ENCODE measurements at regions of chr11 and their contacts with region 1.

Region 1: GRCh38 chr11:128172046-128172878 is 415.1 kb downstream of the ETS1 start:
- DNase-seq: peak; percentile 84 to 88
- H3K4me3 ChIP-seq: no peak overlapping the region
- H3K4me3 Mint-ChIP-seq: no peak overlapping the region
- H3K27ac Mint-ChIP-seq: no peak overlapping the region
- H3K4me1 ChIP-seq: peaks cover 3% of the 10 kb centered on the region; the same call in 1 of the 2 replicates
- H3K4me1 Mint-ChIP-seq: no peaks in the 10 kb centered on the region
- H3K27me3 ChIP-seq: no peaks in the 10 kb centered on the region
- H3K27me3 Mint-ChIP-seq: peaks cover 12% of the 10 kb centered on the region
- CTCF ChIP-seq: peak; percentile 94 to 96

Region 2: GRCh38 chr11:128210148-128210940 is 38.1 kb after region 1 on chr11:
- CTCF ChIA-PET with region 1: interaction called, 5 read pairs
- POLR2A ChIA-PET with region 1: no interaction called
- intact Hi-C with region 1: loop called (anchors 1 kb)
- DNase-seq: peak; percentile 89 to 91
- H3K4me3 ChIP-seq: no peak overlapping the region
- H3K4me3 Mint-ChIP-seq: peak overlapping the region; percentile 62
- H3K27ac Mint-ChIP-seq: peak overlapping the region; percentile 80
- H3K4me1 ChIP-seq: peaks cover 46% of the 10 kb centered on the region
- H3K4me1 Mint-ChIP-seq: peaks cover 40% of the 10 kb centered on the region
- H3K27me3 ChIP-seq: no peaks in the 10 kb centered on the region
- H3K27me3 Mint-ChIP-seq: no peaks in the 10 kb centered on the region
- CTCF ChIP-seq: no peak

Region 3: DNA sequence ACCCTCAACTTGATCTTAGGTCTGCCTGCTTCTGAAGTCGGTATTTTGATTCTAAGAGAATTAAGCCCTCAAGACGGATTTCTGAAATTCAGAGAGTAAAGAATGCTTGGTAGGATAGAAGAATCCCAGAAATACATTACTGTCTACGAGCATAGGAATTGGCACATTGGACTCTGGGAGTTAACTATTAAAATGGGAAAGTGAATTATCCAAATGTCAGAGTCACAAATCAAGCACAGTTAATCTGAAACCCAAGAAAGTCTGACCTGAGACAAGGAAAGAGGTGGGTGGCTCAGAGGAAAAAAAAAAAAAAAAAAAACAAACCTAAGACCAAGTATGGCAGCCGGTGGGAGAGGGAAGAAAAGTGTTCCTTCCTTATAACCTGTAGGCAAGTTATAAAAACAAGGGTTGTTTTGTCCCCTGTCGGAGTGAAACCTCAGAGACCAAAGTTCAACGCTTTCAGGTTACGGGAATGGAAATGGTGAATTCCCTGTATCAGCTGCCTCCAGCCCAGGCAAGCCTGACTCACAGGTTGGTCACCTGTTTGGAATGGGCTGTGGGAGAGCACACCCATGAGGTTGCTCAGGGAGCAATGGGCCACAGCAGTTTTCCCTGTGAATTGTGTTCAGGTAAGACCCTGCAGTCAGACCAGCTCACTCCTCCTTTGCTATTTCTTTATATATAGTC is 276.1 kb after region 1 on chr11:
- CTCF ChIA-PET with region 1: interaction called, 10 read pairs
- POLR2A ChIA-PET with region 1: no interaction called
- intact Hi-C with region 1: loop called (anchors 1 kb)
- DNase-seq: peak; percentile 88 to 95
- H3K4me3 ChIP-seq: no peak overlapping the region
- H3K4me3 Mint-ChIP-seq: peak overlapping the region; percentile 60
- H3K27ac Mint-ChIP-seq: peak overlapping the region; percentile 84
- H3K4me1 ChIP-seq: peaks cover 19% of the 10 kb centered on the region
- H3K4me1 Mint-ChIP-seq: peaks cover 14% of the 10 kb centered on the region
- H3K27me3 ChIP-seq: no peaks in the 10 kb centered on the region
- H3K27me3 Mint-ChIP-seq: no peaks in the 10 kb centered on the region
- CTCF ChIP-seq: peak in 1 of 2 experiments; percentile 59

Region 4: GRCh38 chr11:128630367-128631230 is 458.3 kb after region 1 on chr11:
- CTCF ChIA-PET with region 1: interaction called, 17 read pairs
- POLR2A ChIA-PET with region 1: no interaction called
- intact Hi-C with region 1: loop called (anchors 1 kb)
- DNase-seq: peak; percentile 82 to 88
- H3K4me3 ChIP-seq: no peak overlapping the region
- H3K4me3 Mint-ChIP-seq: no peak overlapping the region
- H3K27ac Mint-ChIP-seq: no peak overlapping the region
- H3K4me1 ChIP-seq: no peaks in the 10 kb centered on the region
- H3K4me1 Mint-ChIP-seq: no peaks in the 10 kb centered on the region
- H3K27me3 ChIP-seq: peaks cover 1% of the 10 kb centered on the region; the same call in 1 of the 2 replicates
- H3K27me3 Mint-ChIP-seq: peaks cover 10% of the 10 kb centered on the region
- CTCF ChIP-seq: peak; percentile 96 to 97

Region 5: DNA sequence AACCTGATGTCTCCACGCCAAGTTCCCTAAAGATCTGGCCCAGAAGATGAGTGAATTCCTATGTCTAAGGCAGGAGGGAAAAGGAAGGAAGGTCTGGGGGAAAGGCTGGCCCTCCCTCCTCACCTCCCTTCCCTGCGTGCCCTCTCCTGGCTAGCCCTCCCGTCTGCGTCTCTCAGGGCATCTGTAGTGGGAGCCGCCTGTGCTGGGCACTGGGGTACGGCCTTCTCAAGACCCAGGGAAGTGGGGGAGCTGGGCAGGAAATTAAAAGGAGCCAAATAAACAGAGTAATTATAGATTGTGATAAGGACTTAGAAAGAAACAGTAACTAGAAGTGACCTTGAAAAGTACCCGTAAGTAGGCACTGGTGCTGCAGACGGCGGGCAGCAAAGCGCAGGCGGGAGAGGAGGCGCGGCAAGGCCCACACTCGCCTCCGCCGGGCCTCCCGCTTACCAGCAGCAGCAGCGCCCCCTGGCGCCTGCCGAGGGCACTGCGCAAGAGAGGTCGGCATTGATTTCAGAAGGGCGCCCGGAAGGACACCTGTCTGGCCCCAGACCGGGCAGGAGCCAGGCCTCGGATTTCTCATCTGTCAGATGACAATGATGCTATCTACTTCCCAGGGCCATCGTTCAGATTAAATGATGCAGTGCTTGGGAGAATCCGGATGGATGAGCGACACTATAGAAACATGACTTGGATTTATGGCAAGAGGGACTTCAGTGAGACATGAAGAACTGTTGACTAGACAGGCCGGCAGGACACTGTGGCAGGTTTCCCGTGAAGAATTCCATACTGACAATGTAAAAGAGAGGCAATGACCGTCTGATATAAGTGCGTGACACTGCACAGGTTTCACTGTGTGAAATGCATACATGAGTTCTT is 687.5 kb after region 1 on chr11:
- CTCF ChIA-PET with region 1: no interaction called
- POLR2A ChIA-PET with region 1: no interaction called
- intact Hi-C with region 1: loop called (anchors 1 kb)
- DNase-seq: peak; percentile 65 to 80
- H3K4me3 ChIP-seq: no peak overlapping the region
- H3K4me3 Mint-ChIP-seq: no peak overlapping the region
- H3K27ac Mint-ChIP-seq: no peak overlapping the region
- H3K4me1 ChIP-seq: no peaks in the 10 kb centered on the region
- H3K4me1 Mint-ChIP-seq: no peaks in the 10 kb centered on the region
- H3K27me3 ChIP-seq: peaks cover under 1% of the 10 kb centered on the region; the same call in 1 of the 2 replicates
- H3K27me3 Mint-ChIP-seq: peaks cover 34% of the 10 kb centered on the region
- CTCF ChIP-seq: peak; percentile 91 to 97